ENCODE measurements at regions of chr1 and their contacts with region 1.

Region 1: GRCh38 chr1:239951511-239952140 is 140.1 kb upstream of the FMN2 start:
- DNase-seq: peak; percentile 19
- H3K4me3 ChIP-seq: no peak overlapping the region
- H3K27ac ChIP-seq: no peak overlapping the region
- H3K4me1 ChIP-seq: no peaks in the 10 kb centered on the region
- H3K27me3 ChIP-seq: no peaks in the 10 kb centered on the region
- CTCF ChIP-seq: peak; percentile 64 to 66

Region 2: DNA sequence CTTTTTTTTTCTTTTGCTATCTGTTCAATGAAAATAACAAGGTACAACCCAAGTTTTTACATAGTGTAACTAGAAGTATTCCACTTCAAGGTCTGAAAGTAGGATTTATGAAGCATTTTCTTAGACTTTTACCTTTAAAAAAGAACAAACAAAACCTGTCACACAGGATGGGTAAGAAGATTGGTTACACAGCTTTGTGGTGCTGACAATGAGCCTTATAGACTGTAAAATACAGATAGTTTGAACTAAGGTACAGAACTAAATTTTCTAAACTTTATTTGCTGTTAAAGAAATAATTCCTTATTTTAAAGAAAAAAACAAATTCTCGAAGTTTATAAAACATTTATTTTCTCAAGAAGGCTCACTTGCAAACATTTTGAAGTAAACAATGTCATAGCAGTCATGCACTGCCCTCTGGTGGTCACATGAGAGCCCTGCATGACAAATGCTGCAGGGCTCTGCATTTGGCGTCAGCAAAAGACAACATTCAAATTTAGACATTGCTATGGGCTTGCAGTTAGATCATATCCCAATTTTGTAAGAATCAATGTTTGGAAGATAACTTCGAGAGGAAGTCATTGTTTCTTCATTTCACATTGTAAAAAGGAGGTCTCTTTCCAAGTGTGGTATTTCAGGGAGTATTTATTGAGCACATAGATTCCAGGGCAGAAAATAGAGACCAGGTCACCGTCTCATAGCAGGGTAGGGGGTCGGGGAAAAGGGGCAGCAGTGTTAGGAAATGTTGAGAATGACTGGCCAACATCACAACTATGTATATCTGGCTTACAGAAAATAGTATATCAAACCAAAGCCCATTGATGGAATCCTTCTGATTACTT is 24.7 kb after region 1 on chr1:
- CTCF ChIA-PET with region 1: no interaction called
- dilution Hi-C with region 1: no loop called
- in situ Hi-C with region 1: no loop called
- intact Hi-C with region 1: loop called (anchors 1 kb)
- DNase-seq: peak; percentile 21
- H3K4me3 ChIP-seq: no peak overlapping the region
- H3K27ac ChIP-seq: no peak overlapping the region
- H3K4me1 ChIP-seq: no peaks in the 10 kb centered on the region
- H3K27me3 ChIP-seq: no peaks in the 10 kb centered on the region
- CTCF ChIP-seq: peak; percentile 91 to 99

Region 3: GRCh38 chr1:239987103-239987745 is 35.6 kb after region 1 on chr1:
- CTCF ChIA-PET with region 1: interaction called, 3 read pairs
- dilution Hi-C with region 1: no loop called
- in situ Hi-C with region 1: no loop called
- intact Hi-C with region 1: loop called (anchors 1 kb)
- DNase-seq: peak; percentile 5
- H3K4me3 ChIP-seq: no peak overlapping the region
- H3K27ac ChIP-seq: no peak overlapping the region
- H3K4me1 ChIP-seq: no peaks in the 10 kb centered on the region
- H3K27me3 ChIP-seq: no peaks in the 10 kb centered on the region
- CTCF ChIP-seq: peak; percentile 48 to 67